Caco-2 (cell line): ENCODE measurements at regions of chr5 and their contacts with region 1.

Region 1: DNA sequence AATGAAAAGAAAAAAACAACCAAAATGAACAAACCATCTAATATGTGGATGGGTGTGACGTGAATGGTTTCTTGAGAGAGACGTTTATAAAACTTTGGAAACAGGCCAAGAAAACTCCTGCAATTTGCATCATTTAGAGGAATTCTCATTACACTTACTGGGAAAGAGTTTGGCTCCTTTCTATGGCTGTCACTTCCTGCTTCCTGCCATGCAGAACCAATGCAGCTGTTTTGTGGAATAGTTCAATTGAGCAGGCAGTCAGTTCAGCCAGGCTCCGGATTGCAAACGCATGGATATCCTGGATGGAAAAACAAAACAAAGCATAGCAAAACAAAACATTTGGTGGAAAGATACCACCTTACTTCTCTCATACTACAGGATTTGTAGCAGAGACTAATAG is 36.6 kb downstream of the FAM114A2 start:
- DNase-seq: no peak
- H3K4me3 ChIP-seq: no peak overlapping the region
- H3K4me3 Mint-ChIP-seq: no peak overlapping the region
- H3K27ac Mint-ChIP-seq: no peak overlapping the region
- H3K4me1 ChIP-seq: no peaks in the 10 kb centered on the region
- H3K4me1 Mint-ChIP-seq: no peaks in the 10 kb centered on the region
- H3K27me3 ChIP-seq: no peaks in the 10 kb centered on the region
- H3K27me3 Mint-ChIP-seq: no peaks in the 10 kb centered on the region
- CTCF ChIP-seq: no peak

Region 2: GRCh38 chr5:154058055-154059038 is 56.3 kb after region 1 on chr5:
- CTCF ChIA-PET with region 1: no interaction called
- POLR2A ChIA-PET with region 1: interaction called, 12 read pairs
- intact Hi-C with region 1: no loop called
- DNase-seq: no peak
- H3K4me3 ChIP-seq: no peak overlapping the region
- H3K4me3 Mint-ChIP-seq: no peak overlapping the region
- H3K27ac Mint-ChIP-seq: no peak overlapping the region
- H3K4me1 ChIP-seq: no peaks in the 10 kb centered on the region
- H3K4me1 Mint-ChIP-seq: no peaks in the 10 kb centered on the region
- H3K27me3 ChIP-seq: no peaks in the 10 kb centered on the region
- H3K27me3 Mint-ChIP-seq: no peaks in the 10 kb centered on the region
- CTCF ChIP-seq: no peak

Region 3: GRCh38 chr5:154162539-154163151 is 160.6 kb after region 1 on chr5:
- CTCF ChIA-PET with region 1: no interaction called
- POLR2A ChIA-PET with region 1: no interaction called
- intact Hi-C with region 1: no loop called
- DNase-seq: no peak
- H3K4me3 ChIP-seq: no peak overlapping the region
- H3K4me3 Mint-ChIP-seq: no peak overlapping the region
- H3K27ac Mint-ChIP-seq: no peak overlapping the region
- H3K4me1 ChIP-seq: no peaks in the 10 kb centered on the region
- H3K4me1 Mint-ChIP-seq: no peaks in the 10 kb centered on the region
- H3K27me3 ChIP-seq: no peaks in the 10 kb centered on the region
- H3K27me3 Mint-ChIP-seq: peaks cover 29% of the 10 kb centered on the region
- CTCF ChIP-seq: no peak